PC-9 (cell line): ENCODE measurements at regions of chr5 and their contacts with region 1.

Region 1: DNA sequence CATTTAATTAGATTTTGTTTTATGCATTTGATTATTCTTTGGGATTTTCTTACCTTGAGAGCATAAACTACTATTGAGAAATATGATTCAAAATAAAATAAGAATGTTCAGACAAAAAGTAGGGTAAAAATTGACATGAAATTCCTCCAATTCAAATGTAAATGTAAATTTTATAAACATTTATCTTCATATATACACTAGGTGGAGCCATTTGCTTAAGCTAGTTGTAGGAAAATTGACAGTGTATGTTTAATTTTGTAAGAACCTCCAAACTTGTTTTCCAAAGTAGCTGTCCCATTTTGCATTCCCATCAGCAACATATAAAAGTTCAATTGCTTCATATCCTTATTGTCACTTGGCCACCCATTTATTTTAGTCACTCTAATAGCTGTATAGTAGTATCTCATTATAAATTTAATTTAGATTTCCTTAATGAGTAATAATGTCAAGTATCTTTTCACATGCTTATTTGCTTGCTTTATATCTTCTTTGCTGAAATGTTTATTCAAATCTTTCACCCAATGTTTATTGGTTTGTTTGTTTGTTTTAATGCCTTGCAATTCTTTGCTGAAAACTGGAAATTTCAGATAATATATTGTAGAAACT is 37.6 kb upstream of the SLCO6A1 start:
- DNase-seq: no peak
- H3K4me3 ChIP-seq: no peak overlapping the region
- H3K27ac ChIP-seq: no peak overlapping the region
- H3K4me1 ChIP-seq: no peaks in the 10 kb centered on the region
- H3K27me3 ChIP-seq: no peaks in the 10 kb centered on the region
- CTCF ChIP-seq: peak; percentile 70

Region 2: GRCh38 chr5:103224118-103224893 is 687.9 kb after region 1 on chr5:
- CTCF ChIA-PET with region 1: no interaction called
- POLR2A ChIA-PET with region 1: no interaction called
- intact Hi-C with region 1: loop called (anchors 1 kb)
- DNase-seq: peak; percentile 27 to 54
- H3K4me3 ChIP-seq: no peak overlapping the region
- H3K27ac ChIP-seq: no peak overlapping the region
- H3K4me1 ChIP-seq: no peaks in the 10 kb centered on the region
- H3K27me3 ChIP-seq: no peaks in the 10 kb centered on the region
- CTCF ChIP-seq: peak; percentile 83

Region 3: GRCh38 chr5:103393101-103393754 is 856.8 kb after region 1 on chr5:
- CTCF ChIA-PET with region 1: no interaction called
- POLR2A ChIA-PET with region 1: no interaction called
- intact Hi-C with region 1: no loop called
- DNase-seq: no peak
- H3K4me3 ChIP-seq: no peak overlapping the region
- H3K27ac ChIP-seq: no peak overlapping the region
- H3K4me1 ChIP-seq: no peaks in the 10 kb centered on the region
- H3K27me3 ChIP-seq: no peaks in the 10 kb centered on the region
- CTCF ChIP-seq: no peak